ENCODE measurements at regions of chr1 and their contacts with region 1.

Region 1: GRCh38 chr1:26677306-26678115 is 18.3 kb upstream of the ARID1A start:
- DNase-seq: peak; percentile 88
- H3K4me3 ChIP-seq: no peak overlapping the region
- H3K27ac ChIP-seq: no peak overlapping the region
- H3K4me1 ChIP-seq: peaks cover 7% of the 10 kb centered on the region
- H3K27me3 ChIP-seq: no peaks in the 10 kb centered on the region
- CTCF ChIP-seq: peak; percentile 44 to 66
- POLR2A ChIP-seq: no peak

Region 2: DNA sequence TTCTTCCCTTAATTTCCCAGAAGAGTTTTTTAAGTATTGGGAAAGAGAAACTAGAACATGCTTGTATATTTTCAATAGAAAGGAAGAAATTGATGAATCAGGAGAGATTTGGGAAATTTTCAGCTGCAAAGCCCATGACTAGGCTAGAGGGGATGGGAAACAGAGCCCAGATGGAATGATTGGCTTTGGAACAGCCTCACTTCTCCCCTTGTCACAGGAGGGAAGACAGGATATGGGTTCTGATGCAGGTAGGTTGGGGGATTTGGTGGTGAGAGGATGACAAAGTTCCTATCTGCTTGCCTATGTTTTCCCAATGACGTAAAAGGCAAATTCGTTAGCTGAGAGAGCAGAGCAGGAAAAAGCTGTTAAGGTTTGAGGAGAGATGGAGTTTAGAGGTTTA is 12.7 kb before region 1 on chr1:
- CTCF ChIA-PET with region 1: interaction called, 12 read pairs
- POLR2A ChIA-PET with region 1: no interaction called
- dilution Hi-C with region 1: no loop called
- intact Hi-C with region 1: no loop called
- DNase-seq: no peak
- H3K4me3 ChIP-seq: no peak overlapping the region
- H3K27ac ChIP-seq: no peak overlapping the region
- H3K4me1 ChIP-seq: no peaks in the 10 kb centered on the region
- H3K27me3 ChIP-seq: peaks cover 0 to 2% of the 10 kb centered on the region in 2 experiments
- CTCF ChIP-seq: no peak
- POLR2A ChIP-seq: no peak

Region 3: GRCh38 chr1:26799479-26800142 is 122.1 kb after region 1 on chr1:
- CTCF ChIA-PET with region 1: interaction called, 6 read pairs
- POLR2A ChIA-PET with region 1: interaction called, 14 read pairs
- dilution Hi-C with region 1: no loop called
- intact Hi-C with region 1: no loop called
- DNase-seq: peak; percentile 55
- H3K4me3 ChIP-seq: peak overlapping the region in 1 of 3 experiments; percentile 57
- H3K27ac ChIP-seq: peak overlapping the region; percentile 72
- H3K4me1 ChIP-seq: peaks cover 12% of the 10 kb centered on the region
- H3K27me3 ChIP-seq: no peaks in the 10 kb centered on the region
- CTCF ChIP-seq: no peak
- POLR2A ChIP-seq: no peak